Mammary epithelial cell (primary cell): ENCODE measurements at regions of chr7 and their contacts with region 1.

Region 1: GRCh38 chr7:148962823-148963582 is 65.3 kb downstream of the PDIA4 start:
- DNase-seq: peak; percentile 59
- H3K4me3 ChIP-seq: peak overlapping the region; percentile 62 to 86 (median 84)
- H3K27ac ChIP-seq: peak overlapping the region; percentile 91
- H3K4me1 ChIP-seq: peaks cover 11% of the 10 kb centered on the region
- H3K27me3 ChIP-seq: no peaks in the 10 kb centered on the region
- CTCF ChIP-seq: peak; percentile 84 to 88

Region 2: DNA sequence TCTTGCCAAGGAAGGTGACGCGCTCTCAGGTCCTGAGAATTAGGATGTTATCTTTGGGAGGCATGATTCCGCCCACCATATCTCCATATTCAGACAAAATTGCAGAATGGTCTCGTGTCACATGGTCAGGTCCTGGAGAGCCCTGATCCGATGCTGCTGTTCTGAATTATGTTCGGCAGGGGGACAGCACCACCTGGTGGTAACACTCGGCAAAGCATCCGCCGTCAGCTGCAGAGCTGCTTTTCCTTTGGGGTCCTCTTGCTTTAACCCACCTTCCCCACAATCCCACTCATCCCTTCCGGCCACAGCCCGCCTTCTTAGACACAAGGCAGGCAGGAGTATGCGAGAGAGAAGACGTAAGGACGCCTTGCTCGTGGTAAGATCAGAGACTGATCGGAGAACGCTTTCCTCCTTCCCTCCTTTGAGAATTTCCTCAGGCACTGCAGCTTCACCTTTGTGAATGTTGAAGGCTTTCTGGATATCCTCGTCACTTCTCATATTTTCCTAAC is 700.2 kb before region 1 on chr7:
- CTCF ChIA-PET with region 1: no interaction called
- dilution Hi-C with region 1: no loop called
- in situ Hi-C with region 1: loop called (anchors 25 kb)
- intact Hi-C with region 1: loop called (anchors 1 kb)
- DNase-seq: peak; percentile 17
- H3K4me3 ChIP-seq: no peak overlapping the region
- H3K27ac ChIP-seq: no peak overlapping the region
- H3K4me1 ChIP-seq: no peaks in the 10 kb centered on the region
- H3K27me3 ChIP-seq: no peaks in the 10 kb centered on the region
- CTCF ChIP-seq: peak; percentile 81 to 93

Region 3: DNA sequence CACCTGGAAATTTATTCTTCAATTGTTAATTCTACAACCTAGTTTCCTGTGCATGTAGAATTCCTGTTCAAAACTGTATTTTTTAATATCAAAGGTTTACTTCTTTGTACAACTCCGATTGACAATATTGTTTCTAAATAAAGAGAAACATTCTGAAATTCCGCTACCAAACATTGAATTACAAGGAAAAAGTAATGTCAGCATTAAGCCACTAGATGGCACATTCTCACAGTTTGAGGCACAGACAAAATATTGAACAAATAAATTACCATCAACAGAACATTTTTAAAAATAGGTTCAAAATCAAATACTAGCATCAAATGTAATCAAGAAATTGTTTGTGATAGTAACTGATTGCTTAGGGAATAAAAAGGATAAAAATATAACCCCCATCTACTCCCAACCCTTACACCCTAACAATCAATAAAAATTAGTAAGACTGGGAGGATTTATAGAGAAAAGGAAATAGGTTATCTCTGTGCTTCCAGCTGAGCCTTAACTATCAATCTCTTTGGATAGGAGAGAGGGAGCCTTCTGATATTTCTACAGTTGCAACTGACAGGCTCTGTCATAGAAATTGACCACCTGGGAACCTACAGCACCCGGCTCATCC is 459.0 kb before region 1 on chr7:
- CTCF ChIA-PET with region 1: interaction called, 3 read pairs
- dilution Hi-C with region 1: loop called (anchors 5 kb)
- in situ Hi-C with region 1: loop called (anchors 10 kb)
- intact Hi-C with region 1: loop called (anchors 1 kb)
- DNase-seq: peak; percentile 15
- H3K4me3 ChIP-seq: no peak overlapping the region
- H3K27ac ChIP-seq: no peak overlapping the region
- H3K4me1 ChIP-seq: no peaks in the 10 kb centered on the region
- H3K27me3 ChIP-seq: peaks cover 3% of the 10 kb centered on the region
- CTCF ChIP-seq: peak; percentile 71 to 86

Region 4: DNA sequence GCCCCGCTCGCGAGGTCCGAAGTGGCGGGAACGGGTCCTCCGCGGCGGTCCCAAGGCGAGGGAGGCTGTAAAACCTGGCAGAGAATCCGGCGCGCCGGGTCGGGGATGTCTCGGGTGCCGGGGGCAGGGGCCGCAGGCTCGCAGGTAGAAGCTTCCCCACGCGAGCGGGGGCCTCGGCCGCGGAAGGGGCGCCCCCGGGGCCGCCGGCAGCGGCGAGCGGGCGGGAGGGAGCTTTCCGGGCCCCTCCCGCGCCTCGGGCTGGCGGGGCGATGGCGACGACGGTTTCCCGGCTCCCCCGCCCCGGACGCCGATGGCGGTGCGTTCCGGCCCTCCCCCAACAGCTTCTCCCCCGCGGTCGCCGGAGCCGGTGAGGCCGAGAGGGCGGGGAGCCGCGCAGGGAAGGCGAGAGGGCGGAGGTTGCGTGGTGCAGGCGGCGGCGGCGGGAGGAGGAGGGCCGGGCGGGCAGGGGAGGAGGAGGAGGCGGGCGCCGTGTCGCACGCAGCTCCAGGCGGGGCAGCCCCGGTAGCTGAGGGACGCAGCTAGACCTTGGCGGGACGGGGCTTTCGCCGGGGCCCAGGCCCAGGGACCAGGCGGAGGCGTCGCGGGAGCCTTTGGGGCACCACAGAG is 264.5 kb before region 1 on chr7 and contains the start of gene CUL1:
- CTCF ChIA-PET with region 1: no interaction called
- dilution Hi-C with region 1: no loop called
- in situ Hi-C with region 1: no loop called
- intact Hi-C with region 1: loop called (anchors 5 kb)
- DNase-seq: peak; percentile 79
- H3K4me3 ChIP-seq: peak within 1 kb of the TSS; percentile 49 to 85 (median 79)
- H3K27ac ChIP-seq: peak within 1 kb of the TSS; percentile 89
- H3K4me1 ChIP-seq: peaks cover 48% of the 10 kb centered on the region
- H3K27me3 ChIP-seq: no peaks in the 10 kb centered on the region
- CTCF ChIP-seq: no peak
- total RNA-seq, gene CUL1: 53.5 to 54.9 TPM

Region 5: DNA sequence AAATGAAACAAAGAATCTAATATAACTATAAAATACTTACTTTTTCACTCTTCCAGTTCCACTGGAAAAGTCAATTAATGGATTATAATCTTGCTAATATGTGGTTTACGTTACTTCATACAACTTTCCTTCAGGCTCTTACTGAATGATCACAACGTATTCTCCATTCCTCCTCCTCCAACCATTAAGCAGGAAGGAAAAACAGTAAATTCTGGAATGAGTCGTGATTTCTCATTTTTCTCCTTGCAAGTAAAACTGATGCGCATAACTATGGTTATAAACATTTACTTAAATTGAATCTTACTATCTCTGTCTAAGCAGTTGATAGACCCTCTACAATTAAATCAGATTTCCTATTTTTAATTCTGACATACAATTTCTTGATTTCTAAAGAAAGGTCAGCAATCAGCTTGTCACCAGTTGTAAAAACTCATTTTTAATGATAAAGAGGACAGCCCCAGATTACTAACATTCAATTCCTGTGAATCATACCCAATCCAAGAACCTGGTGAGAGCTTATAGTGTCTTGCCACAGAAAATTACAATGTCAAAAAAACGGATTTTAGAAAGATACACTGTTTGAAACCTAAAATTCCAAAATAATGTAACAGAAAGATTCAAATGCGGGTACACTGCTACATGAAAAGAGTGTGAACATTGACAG is 143.2 kb before region 1 on chr7:
- CTCF ChIA-PET with region 1: no interaction called
- dilution Hi-C with region 1: no loop called
- in situ Hi-C with region 1: no loop called
- intact Hi-C with region 1: loop called (anchors 10 kb)
- DNase-seq: peak; percentile 14
- H3K4me3 ChIP-seq: no peak overlapping the region
- H3K27ac ChIP-seq: no peak overlapping the region
- H3K4me1 ChIP-seq: peaks cover 9% of the 10 kb centered on the region
- H3K27me3 ChIP-seq: no peaks in the 10 kb centered on the region
- CTCF ChIP-seq: no peak

Region 6: GRCh38 chr7:148940702-148941597 is 22.1 kb before region 1 on chr7:
- CTCF ChIA-PET with region 1: no interaction called
- dilution Hi-C with region 1: no loop called
- in situ Hi-C with region 1: no loop called
- intact Hi-C with region 1: loop called (anchors 1 kb)
- DNase-seq: peak; percentile 77
- H3K4me3 ChIP-seq: peak overlapping the region; percentile 67 to 74 (median 73)
- H3K27ac ChIP-seq: peak overlapping the region; percentile 97
- H3K4me1 ChIP-seq: no peaks in the 10 kb centered on the region
- H3K27me3 ChIP-seq: no peaks in the 10 kb centered on the region
- CTCF ChIP-seq: no peak

Region 7: DNA sequence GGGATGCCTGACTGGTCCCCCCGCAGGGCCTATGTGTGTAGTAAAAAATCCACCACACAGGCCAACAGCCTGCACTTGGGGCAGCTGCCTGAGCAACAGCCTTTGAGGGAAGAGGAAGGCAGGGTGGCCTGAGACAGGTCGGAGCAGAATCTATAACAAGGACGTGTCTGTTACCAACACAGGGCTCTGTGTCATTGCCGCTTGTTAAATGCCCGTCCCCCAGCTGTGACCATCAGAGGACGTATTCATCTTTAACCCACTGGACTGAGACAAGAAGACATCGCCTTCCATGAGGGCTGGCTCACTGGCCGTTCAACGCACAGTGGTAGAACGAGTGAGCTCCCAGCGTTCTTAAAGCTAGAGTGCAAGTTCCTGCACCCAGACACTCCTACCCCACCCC is 57.5 kb after region 1 on chr7:
- CTCF ChIA-PET with region 1: no interaction called
- dilution Hi-C with region 1: no loop called
- in situ Hi-C with region 1: no loop called
- intact Hi-C with region 1: no loop called
- DNase-seq: no peak
- H3K4me3 ChIP-seq: no peak overlapping the region
- H3K27ac ChIP-seq: no peak overlapping the region
- H3K4me1 ChIP-seq: peaks cover 12% of the 10 kb centered on the region
- H3K27me3 ChIP-seq: no peaks in the 10 kb centered on the region
- CTCF ChIP-seq: no peak

Region 8: GRCh38 chr7:149031353-149031910 is 68.4 kb after region 1 on chr7:
- CTCF ChIA-PET with region 1: no interaction called
- dilution Hi-C with region 1: no loop called
- in situ Hi-C with region 1: no loop called
- intact Hi-C with region 1: no loop called
- DNase-seq: no peak
- H3K4me3 ChIP-seq: no peak overlapping the region
- H3K27ac ChIP-seq: no peak overlapping the region
- H3K4me1 ChIP-seq: peaks cover 9% of the 10 kb centered on the region
- H3K27me3 ChIP-seq: no peaks in the 10 kb centered on the region
- CTCF ChIP-seq: no peak

Region 9: GRCh38 chr7:149090397-149091195 is 127.6 kb after region 1 on chr7 and contains the start of gene ZNF786:
- CTCF ChIA-PET with region 1: no interaction called
- dilution Hi-C with region 1: no loop called
- in situ Hi-C with region 1: no loop called
- intact Hi-C with region 1: loop called (anchors 2 kb)
- DNase-seq: peak; percentile 84
- H3K4me3 ChIP-seq: peak within 1 kb of the TSS; percentile 78 to 99 (median 94)
- H3K27ac ChIP-seq: peak within 1 kb of the TSS; percentile 58
- H3K4me1 ChIP-seq: peaks cover 7% of the 10 kb centered on the region
- H3K27me3 ChIP-seq: no peaks in the 10 kb centered on the region
- CTCF ChIP-seq: peak; percentile 58 to 87
- total RNA-seq, gene ZNF786: 5.3 to 15.7 TPM

Region 10: GRCh38 chr7:149245244-149245643 is 282.2 kb after region 1 on chr7:
- CTCF ChIA-PET with region 1: no interaction called
- dilution Hi-C with region 1: no loop called
- in situ Hi-C with region 1: no loop called
- intact Hi-C with region 1: no loop called
- DNase-seq: no peak
- H3K4me3 ChIP-seq: no peak overlapping the region
- H3K27ac ChIP-seq: no peak overlapping the region
- H3K4me1 ChIP-seq: peaks cover 5% of the 10 kb centered on the region
- H3K27me3 ChIP-seq: no peaks in the 10 kb centered on the region
- CTCF ChIP-seq: no peak